ENCODE measurements at regions of chr22 and their contacts with region 1.

Region 1: GRCh38 chr22:28442264-28442710 is 237.4 kb downstream of the TTC28 start:
- DNase-seq: peak; percentile 81 to 89 (median 84)
- ATAC-seq: peak; percentile 89
- H3K4me3 ChIP-seq: peak overlapping the region; percentile 6 to 35
- H3K27ac ChIP-seq: peak overlapping the region; percentile 60 to 80 (median 77)
- H3K4me1 ChIP-seq: peaks cover 36% of the 10 kb centered on the region
- H3K27me3 ChIP-seq: no peaks in the 10 kb centered on the region
- CTCF ChIP-seq: peak; percentile 47 to 87 (median 73)
- POLR2A ChIP-seq: peak in 1 of 3 donors; percentile 55

Region 2: GRCh38 chr22:28019881-28020871 is 422.1 kb before region 1 on chr22:
- intact Hi-C with region 1: loop called (anchors 10 kb)
- DNase-seq: peak; percentile 66 to 79 (median 72)
- ATAC-seq: peak; percentile 81
- H3K4me3 ChIP-seq: no peak overlapping the region
- H3K27ac ChIP-seq: no peak overlapping the region
- H3K4me1 ChIP-seq: no peaks in the 10 kb centered on the region
- H3K27me3 ChIP-seq: no peaks in the 10 kb centered on the region
- CTCF ChIP-seq: peak; percentile 69 to 94 (median 84)
- POLR2A ChIP-seq: no peak

Region 3: DNA sequence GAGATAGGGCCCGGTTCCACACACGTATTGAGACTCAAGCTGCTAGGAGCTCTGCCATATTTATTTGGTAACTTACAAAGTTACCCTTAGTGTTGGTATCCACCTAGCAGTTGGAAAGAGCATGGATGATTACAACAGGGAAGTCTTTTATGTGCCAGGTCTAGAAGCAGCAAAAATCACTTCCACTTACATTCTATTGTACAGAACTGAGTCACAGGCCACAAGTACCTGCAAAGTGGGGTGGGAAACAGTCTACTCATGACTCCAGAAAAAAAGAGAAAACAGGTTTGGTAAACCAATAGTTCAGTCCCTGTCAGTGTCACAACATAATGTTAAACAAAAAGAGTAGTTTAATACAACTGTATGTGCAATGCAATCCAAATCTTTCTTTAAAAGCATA is 243.6 kb before region 1 on chr22:
- intact Hi-C with region 1: no loop called
- DNase-seq: no peak
- ATAC-seq: no peak
- H3K4me3 ChIP-seq: no peak overlapping the region
- H3K27ac ChIP-seq: no peak overlapping the region
- H3K4me1 ChIP-seq: no peaks in the 10 kb centered on the region
- H3K27me3 ChIP-seq: no peaks in the 10 kb centered on the region
- CTCF ChIP-seq: no peak
- POLR2A ChIP-seq: no peak

Region 4: DNA sequence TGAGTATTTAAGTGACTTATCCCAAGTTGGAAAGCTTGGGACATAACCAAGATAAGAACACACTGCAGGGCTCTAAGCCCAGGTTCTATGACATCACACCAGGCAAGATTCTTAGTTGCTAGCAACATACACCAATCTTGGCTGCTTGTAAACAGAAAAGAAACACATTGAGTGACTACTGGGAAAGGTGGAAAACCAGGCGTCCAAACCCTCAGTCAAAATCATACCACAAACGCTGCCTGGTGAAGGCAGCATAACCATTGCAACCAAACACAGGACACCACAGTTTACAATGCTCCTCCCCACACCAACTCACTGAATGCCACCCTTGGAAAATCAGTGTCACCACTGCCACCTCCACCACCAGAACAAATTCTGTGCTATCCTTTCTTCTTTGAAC is 142.5 kb before region 1 on chr22:
- intact Hi-C with region 1: no loop called
- DNase-seq: peak; percentile 14 to 46 (median 32)
- ATAC-seq: peak; percentile 88
- H3K4me3 ChIP-seq: no peak overlapping the region
- H3K27ac ChIP-seq: no peak overlapping the region
- H3K4me1 ChIP-seq: peaks cover 7% of the 10 kb centered on the region
- H3K27me3 ChIP-seq: no peaks in the 10 kb centered on the region
- CTCF ChIP-seq: no peak
- POLR2A ChIP-seq: no peak

Region 5: DNA sequence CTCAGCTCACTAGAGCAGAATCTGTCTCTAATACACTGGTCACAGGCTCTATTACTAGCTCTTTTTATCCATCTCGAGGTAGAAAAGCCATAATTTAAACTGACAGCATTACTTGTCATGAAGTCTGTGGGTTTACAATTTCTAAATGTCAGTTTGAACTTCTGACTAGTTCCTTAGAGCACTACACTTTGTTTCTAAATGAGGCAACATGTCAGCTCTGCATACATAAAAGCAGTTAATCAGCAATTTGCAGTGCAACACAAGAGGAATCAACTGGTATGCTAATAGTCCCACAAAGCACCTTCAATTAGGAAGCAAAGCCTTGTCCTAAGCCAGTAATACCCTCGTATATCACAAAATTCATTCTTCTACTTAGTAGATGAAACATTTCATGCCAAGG is 84.0 kb before region 1 on chr22:
- intact Hi-C with region 1: no loop called
- DNase-seq: no peak
- ATAC-seq: no peak
- H3K4me3 ChIP-seq: no peak overlapping the region
- H3K27ac ChIP-seq: no peak overlapping the region
- H3K4me1 ChIP-seq: no peaks in the 10 kb centered on the region
- H3K27me3 ChIP-seq: no peaks in the 10 kb centered on the region
- CTCF ChIP-seq: no peak
- POLR2A ChIP-seq: no peak

Region 6: GRCh38 chr22:28505416-28506149 is 63.3 kb after region 1 on chr22:
- intact Hi-C with region 1: no loop called
- DNase-seq: no peak
- ATAC-seq: no peak
- H3K4me3 ChIP-seq: no peak overlapping the region
- H3K27ac ChIP-seq: no peak overlapping the region
- H3K4me1 ChIP-seq: no peaks in the 10 kb centered on the region
- H3K27me3 ChIP-seq: no peaks in the 10 kb centered on the region
- CTCF ChIP-seq: no peak
- POLR2A ChIP-seq: no peak

Measured in body of pancreas (tissue), 4 donors.